Activated naive CD4-positive, alpha-beta T cell treated with anti-CD3 and anti-CD28 coated beads, Interleukin-2, amount 10 ng/mL, durations not matched to agents 7 days and 5 days (primary cell): ENCODE measurements at regions of chr19 and their contacts with region 1.

Region 1: DNA sequence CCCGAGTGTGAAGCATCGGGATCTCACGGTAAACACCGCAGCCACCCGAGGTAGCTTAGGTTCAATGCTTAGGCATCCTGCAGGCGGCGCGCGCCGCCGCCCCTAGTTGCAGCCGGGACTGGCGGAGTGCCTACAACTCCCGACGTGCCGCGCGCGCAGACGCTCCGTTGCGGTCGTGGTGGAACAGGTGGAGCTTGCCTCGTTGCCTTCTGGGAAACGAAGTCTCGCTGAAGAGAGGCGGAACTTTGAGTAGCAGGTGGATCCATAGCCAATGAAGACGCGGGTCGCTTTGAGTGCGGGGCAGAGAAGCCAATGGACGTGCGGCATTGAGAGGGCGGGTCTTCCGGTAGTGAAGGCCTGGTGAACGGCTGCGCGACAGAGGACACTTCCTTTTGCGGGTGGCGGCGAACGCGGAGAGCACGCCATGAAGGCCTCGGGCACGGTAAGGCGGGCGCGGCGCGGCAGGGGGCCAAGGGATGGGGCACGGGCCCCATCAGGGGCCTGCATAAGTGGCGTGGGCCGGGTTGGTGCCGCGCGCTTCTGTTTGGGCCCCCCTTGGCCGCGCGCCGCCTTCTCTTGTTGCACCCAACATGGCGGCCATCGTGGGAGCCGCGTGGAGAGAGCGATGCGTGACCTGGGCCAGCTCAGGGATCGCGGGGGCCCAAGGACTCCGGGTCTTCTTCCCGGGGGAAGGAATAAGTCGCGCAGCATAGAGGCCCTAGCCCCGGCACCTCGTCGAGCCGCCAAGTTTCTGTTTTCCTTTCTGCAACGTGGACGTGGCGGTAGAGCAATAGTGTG is at the start of gene RPL18A:
- DNase-seq: peak; percentile 100
- H3K4me3 Mint-ChIP-seq: peak within 1 kb of the TSS; percentile 96
- H3K27ac Mint-ChIP-seq: peak within 1 kb of the TSS; percentile 95
- H3K4me1 Mint-ChIP-seq: peaks cover 35% of the 10 kb centered on the region
- H3K27me3 Mint-ChIP-seq: peaks cover 7% of the 10 kb centered on the region

Region 2: DNA sequence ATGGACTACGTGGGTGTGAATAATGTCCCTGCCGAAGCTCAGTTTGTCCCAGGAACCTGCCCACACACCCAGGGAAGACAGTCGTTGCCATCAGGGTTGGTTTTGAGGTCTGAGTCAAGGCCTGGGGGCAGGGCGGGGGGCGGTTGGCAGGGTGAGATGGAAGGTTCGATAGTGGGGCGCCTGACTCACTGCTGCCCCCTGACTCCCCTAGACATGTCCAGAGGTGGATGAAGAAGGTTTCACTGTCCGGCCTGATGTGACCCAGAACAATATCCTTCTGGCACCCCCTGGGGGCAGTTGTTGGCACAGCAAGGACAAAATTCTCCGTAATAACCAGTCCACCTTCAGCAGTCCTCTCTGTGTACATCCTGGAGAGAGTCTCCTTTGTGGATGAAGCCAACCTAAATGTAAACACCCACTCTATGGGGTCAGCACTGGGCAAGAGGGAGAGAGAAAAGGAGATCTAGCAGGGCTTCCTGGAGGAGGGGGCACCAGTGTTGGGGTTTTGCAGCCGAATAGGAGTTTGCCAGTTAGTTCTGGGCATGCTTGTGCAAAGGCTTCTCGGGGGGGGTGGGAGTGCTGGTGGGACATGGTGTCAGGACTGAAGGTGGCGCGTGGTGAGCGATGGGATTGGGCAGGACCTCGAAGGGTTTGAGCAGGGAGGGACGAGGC is 84.4 kb before region 1 on chr19:
- CTCF ChIA-PET with region 1: interaction called, 10 read pairs
- DNase-seq: peak; percentile 54
- H3K4me3 Mint-ChIP-seq: no peak overlapping the region
- H3K27ac Mint-ChIP-seq: no peak overlapping the region
- H3K4me1 Mint-ChIP-seq: peaks cover 5% of the 10 kb centered on the region
- H3K27me3 Mint-ChIP-seq: no peaks in the 10 kb centered on the region

Region 3: DNA sequence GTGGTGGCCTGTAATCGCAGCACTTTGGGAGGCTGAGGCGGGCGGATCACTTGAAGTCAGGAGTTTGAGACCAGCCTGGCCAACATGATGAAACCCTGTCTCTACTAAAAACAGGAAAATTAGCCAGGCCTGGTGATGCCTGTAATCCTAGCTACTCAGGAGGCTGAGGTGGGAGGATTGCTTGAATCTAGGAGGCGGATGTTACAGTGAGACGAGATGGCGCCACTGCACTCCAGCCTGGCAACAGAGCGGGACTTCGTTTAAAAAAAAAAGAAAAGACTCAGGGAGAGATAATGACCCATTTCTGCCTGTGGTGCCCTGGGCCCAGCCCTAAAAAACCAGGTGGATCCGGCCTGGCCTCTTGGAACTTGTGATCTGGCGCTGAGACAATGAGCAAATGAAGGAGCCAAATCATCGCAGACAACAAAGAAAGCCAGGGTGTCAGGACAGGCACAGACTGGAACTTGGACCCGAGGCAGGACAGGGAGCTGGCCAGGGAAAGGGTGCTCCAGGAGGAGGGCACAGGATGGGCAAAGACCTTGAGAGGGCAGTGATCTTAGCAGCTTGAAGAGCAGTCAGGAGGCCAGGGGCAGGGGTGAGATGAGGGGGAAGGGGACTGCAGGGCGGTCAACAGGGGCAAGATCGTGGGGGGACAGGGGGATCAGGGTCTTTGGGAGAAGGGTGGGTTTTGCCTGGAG is 11.0 kb before region 1 on chr19:
- CTCF ChIA-PET with region 1: interaction called, 15 read pairs
- DNase-seq: no peak
- H3K4me3 Mint-ChIP-seq: peak overlapping the region; percentile 93
- H3K27ac Mint-ChIP-seq: peak overlapping the region; percentile 97
- H3K4me1 Mint-ChIP-seq: peaks cover 70% of the 10 kb centered on the region
- H3K27me3 Mint-ChIP-seq: no peaks in the 10 kb centered on the region

Region 4: GRCh38 chr19:17932485-17933338 is 73.0 kb after region 1 on chr19 and contains the start of gene CCDC124:
- CTCF ChIA-PET with region 1: interaction called, 101 read pairs
- DNase-seq: peak; percentile 96
- H3K4me3 Mint-ChIP-seq: peak within 1 kb of the TSS; percentile 88
- H3K27ac Mint-ChIP-seq: peak within 1 kb of the TSS; percentile 89
- H3K4me1 Mint-ChIP-seq: peaks cover 22% of the 10 kb centered on the region
- H3K27me3 Mint-ChIP-seq: peaks cover 6% of the 10 kb centered on the region

Region 5: GRCh38 chr19:18000935-18001778 is 141.4 kb after region 1 on chr19:
- CTCF ChIA-PET with region 1: interaction called, 18 read pairs
- DNase-seq: peak; percentile 95
- H3K4me3 Mint-ChIP-seq: peak overlapping the region; percentile 74
- H3K27ac Mint-ChIP-seq: peak overlapping the region; percentile 97
- H3K4me1 Mint-ChIP-seq: peaks cover 33% of the 10 kb centered on the region
- H3K27me3 Mint-ChIP-seq: peaks cover 5% of the 10 kb centered on the region